ENCODE measurements at regions of chr13 and their contacts with region 1.

Region 1: DNA sequence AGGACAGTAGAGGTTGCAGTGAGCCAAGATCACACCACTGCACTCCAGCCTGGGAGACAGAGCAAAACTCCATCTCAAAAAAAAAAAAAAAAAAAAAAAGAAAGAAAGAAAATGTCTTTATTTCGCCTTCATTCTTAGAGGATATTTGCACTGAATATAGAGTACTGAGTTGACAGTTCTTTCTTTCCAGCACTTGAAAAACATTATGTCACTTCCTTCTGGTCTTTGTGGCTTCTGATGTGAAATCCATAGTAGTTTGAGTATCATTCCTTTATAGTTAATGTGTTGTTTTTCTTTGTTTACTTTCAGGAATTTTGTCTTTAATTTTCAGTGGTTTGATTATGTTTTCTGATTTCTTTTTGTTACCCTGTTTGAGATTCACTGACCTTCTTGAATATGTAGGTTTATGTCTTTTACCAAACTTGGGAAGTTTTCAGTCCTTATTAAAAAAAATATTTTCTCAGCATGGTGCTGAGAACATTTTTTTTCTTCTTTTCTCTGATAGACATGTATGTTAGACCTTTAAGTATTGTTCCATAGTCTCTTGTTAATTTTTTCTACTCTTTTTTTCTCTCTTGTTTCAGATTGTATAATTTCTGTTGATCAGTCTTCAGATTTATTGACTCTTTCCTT is 50.1 kb downstream of the PCCA start:
- DNase-seq: no peak

Region 2: GRCh38 chr13:98279473-98280175 is 1859.4 kb before region 1 on chr13:
- intact Hi-C with region 1: no loop called
- DNase-seq: no peak

Region 3: DNA sequence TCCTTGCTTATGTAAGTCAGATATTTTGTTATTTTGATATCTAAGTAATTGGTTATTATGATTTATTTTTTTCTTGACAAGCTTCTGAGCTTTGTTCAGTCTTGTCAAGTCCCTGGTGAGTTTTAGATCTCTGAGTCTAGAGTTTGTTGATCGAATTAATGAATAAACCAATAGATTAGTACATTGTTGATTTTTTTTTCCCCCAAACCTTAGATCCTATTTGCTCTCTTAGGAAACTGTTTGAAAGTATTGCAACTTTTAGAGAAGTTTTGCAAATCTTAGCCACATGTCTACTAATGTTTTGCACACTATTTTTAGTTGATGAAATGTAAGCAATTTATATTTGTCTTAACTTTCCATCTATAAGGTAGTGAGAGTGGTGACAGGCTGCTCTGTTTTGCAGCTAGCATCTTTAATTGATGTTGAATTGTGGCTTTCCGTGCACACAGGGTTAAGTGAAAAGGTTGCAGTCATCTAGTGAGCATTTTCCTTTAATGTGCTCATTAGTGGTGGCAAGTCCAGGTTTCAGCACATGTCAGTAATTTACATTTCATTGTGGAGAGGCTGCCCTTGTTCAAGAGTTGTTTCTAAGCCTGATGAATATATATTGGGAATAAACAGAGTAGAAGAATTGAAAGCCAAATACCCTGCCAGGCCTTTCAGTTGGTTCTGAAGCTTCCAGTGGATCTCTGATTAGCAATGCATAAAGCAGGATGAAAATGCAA is 36.3 kb after region 1 on chr13:
- intact Hi-C with region 1: loop called in 1 of 2 experiments (anchors 1 kb)
- DNase-seq: no peak

Region 4: GRCh38 chr13:100854021-100854420 is 715.0 kb after region 1 on chr13:
- intact Hi-C with region 1: no loop called
- DNase-seq: no peak